ENCODE measurements at regions of chr6 and their contacts with region 1.

Region 1: GRCh38 chr6:72622094-72622940 is 453 bp downstream of the KCNQ5 start:
- DNase-seq: peak in 1 of 2 experiments; percentile 45
- H3K4me3 ChIP-seq: peak overlapping the region; percentile 61
- H3K27ac ChIP-seq: no peak overlapping the region
- H3K4me1 ChIP-seq: no peaks in the 10 kb centered on the region
- H3K27me3 ChIP-seq: no peaks in the 10 kb centered on the region
- CTCF ChIP-seq: no peak

Region 2: DNA sequence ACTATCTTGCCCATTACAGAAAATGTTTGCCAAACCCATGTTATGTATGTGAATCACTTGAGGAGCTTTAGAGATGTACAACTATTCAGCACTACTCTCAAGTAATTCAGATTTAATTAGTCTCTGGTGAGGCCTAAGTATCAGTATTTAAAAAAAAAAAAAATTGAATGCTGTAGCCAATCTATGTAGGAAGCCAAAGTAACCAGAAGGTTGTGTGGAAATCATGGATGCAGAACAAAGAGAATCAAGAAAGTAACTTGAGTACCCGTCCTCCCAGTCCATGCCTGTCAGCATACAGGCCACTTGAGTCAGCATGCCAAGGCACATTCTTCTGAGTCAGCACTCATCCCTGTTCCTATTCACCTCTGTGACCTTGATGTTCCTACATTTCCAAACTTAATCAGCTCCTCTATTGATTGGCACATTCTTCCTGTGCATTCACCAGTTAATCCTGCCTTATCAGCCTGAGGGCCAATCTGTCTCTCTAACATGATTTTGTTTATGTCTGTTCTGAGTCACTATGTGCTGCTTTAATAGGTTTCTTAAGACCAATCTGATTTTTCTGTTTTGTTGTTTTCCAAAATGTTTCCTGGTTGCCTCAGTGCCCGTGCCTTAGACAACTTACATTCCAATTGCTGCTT is 165.2 kb after region 1 on chr6:
- CTCF ChIA-PET with region 1: no interaction called
- POLR2A ChIA-PET with region 1: no interaction called
- intact Hi-C with region 1: loop called (anchors 10 kb)
- DNase-seq: peak; percentile 44 to 86
- H3K4me3 ChIP-seq: no peak overlapping the region
- H3K27ac ChIP-seq: peak overlapping the region; percentile 75
- H3K4me1 ChIP-seq: peaks cover 14% of the 10 kb centered on the region
- H3K27me3 ChIP-seq: no peaks in the 10 kb centered on the region
- CTCF ChIP-seq: no peak

Region 3: DNA sequence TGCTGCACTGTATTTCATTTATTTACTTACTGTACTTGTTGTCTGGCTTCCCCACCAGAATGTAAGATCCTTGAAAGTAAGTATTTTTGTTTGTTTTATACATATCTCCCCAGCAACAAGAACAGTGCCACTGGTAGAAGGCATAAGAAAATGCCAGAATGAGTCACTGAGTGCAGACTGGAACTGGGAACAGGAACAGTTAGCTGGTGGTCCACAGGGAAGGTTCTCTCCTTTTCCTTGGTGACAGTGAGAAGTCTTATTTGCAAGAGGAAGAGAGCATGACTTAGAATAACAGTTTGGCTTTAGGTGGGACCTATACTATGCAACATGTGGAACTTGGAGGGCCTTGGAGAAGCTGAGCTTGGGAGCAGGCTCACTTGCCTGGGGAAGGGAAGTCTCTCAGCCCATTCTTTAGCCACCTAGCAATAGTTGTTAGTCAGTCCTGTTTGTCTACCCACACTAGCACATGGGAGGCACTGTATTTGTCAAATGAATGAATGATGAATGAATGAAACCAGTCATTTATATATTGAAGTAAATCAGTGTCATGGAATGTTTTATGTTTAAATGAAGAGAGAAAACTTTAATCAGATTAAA is 203.1 kb after region 1 on chr6:
- CTCF ChIA-PET with region 1: no interaction called
- POLR2A ChIA-PET with region 1: no interaction called
- intact Hi-C with region 1: no loop called
- DNase-seq: peak in 1 of 2 experiments; percentile 41
- H3K4me3 ChIP-seq: no peak overlapping the region
- H3K27ac ChIP-seq: no peak overlapping the region
- H3K4me1 ChIP-seq: no peaks in the 10 kb centered on the region
- H3K27me3 ChIP-seq: no peaks in the 10 kb centered on the region
- CTCF ChIP-seq: no peak

Region 4: DNA sequence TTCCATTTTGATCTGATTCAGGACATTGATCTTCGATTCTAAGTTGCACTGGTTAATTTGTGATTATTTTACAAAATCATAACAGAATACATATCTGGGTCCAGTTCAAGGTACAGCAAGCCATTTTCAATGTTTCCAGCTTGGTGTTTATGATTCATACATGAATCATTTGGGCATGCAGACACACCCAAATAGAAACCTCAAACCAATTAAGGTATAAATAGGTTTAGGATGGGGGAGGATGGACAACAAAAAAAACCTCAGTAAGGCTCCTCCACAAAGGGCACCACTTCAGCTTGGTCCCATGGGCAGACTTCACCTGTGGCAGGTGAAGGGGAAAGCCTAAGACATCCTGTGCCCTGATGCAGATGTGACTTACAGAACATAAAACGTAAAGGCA is 410.3 kb after region 1 on chr6:
- CTCF ChIA-PET with region 1: no interaction called
- POLR2A ChIA-PET with region 1: no interaction called
- intact Hi-C with region 1: loop called (anchors 10 kb)
- DNase-seq: peak; percentile 38 to 61
- H3K4me3 ChIP-seq: no peak overlapping the region
- H3K27ac ChIP-seq: peak overlapping the region; percentile 76
- H3K4me1 ChIP-seq: peaks cover 17% of the 10 kb centered on the region
- H3K27me3 ChIP-seq: no peaks in the 10 kb centered on the region
- CTCF ChIP-seq: no peak

Region 5: DNA sequence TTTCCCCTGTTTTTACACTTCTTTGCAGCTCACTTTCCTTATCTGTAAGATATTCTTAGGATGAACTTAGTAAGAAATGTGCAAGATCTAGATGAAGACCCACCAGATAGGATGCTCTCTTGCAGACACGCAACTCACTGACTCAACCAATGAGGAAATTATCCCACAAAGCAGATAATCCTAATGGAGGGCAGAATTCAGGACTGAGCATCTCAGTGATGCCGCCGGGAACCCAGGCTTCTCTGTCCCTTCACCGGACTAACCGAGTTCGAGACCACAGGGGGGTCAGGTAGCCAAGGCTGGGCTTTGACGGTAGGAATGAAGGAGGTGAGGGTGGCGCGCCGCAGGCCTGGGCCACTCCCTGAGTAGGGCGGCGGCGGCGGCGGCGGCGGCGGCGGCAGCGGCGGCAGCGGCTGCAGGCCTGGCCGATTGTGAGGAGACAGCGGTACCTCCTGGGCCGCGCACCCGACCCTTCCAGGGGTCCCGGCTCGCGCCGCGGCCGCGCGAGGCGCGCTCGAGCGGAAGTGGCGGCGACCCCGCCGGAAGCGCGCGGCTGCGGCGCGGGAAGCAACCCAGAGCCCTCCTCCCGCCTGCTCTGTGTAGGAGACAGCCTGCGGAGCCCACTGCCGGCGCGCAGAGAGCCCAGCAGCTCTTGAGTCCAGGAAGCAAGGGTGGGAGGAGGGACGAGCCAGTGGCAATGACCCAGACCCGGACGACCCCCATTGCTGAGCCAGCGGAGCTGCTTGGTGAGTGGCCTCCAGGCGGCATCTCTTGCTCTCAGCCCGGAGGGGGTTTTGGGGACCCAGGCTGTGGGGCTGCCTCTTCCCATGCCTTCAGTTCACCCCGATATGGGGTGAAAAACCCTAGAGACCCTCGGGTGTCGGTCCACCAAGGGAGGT is 640.6 kb after region 1 on chr6 and contains the start of gene KHDC1:
- CTCF ChIA-PET with region 1: no interaction called
- POLR2A ChIA-PET with region 1: no interaction called
- intact Hi-C with region 1: no loop called
- DNase-seq: peak in 1 of 2 experiments; percentile 41
- H3K4me3 ChIP-seq: peak within 1 kb of the TSS; percentile 61
- H3K27ac ChIP-seq: no peak within 1 kb of the TSS
- H3K4me1 ChIP-seq: peaks cover 6% of the 10 kb centered on the region; the same call in 1 of the 2 replicates
- H3K27me3 ChIP-seq: no peaks in the 10 kb centered on the region
- CTCF ChIP-seq: no peak
- total RNA-seq, gene KHDC1: 14.3 and 16.2 TPM in 2 replicates